GM18951 (cell line): ENCODE measurements at regions of chr1 and their contacts with region 1.

Region 1: GRCh38 chr1:6634371-6635052 is 9.8 kb downstream of the THAP3 start:
- POLR2A ChIP-seq: no peak

Region 2: GRCh38 chr1:6489799-6490180 is 144.7 kb before region 1 on chr1:
- in situ Hi-C with region 1: loop called (anchors 10 kb)
- POLR2A ChIP-seq: peak; percentile 11